Gastrocnemius medialis (tissue), 4 donors: ENCODE measurements at regions of chr13 and their contacts with region 1.

Region 1: DNA sequence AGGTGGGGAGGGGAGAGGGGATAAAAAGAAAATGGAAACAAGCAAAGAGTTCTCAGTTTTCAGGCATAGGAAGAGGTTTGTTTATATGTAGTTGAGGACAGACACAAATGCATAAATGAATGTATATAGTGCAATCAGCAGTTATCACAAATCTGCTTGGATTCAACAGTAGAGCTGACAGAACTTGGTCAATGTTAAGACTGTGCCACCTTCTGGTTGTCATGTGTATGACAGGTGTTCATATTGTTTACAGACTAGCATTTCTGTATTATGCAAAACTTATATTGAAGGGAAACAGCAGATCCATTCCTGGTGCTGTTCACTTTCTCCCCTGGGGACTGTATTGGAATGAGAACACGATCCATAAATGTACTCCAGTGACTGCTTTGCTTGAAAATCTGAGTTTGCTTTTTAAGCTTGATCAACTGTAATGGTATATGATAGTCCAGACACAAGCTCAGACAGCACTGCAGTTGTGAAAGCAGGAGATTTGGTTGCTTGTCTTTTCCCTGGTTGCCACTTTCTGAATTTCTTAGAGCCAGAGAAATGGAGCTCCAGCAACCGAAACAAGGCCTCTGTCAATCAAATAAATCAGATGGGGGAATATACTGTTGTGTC is 319.5 kb upstream of the OBI1 start:
- DNase-seq: no peak
- ATAC-seq: peak; percentile 36 to 62
- H3K4me3 ChIP-seq: no peak overlapping the region
- H3K27ac ChIP-seq: no peak overlapping the region
- H3K4me1 ChIP-seq: no peaks in the 10 kb centered on the region
- H3K27me3 ChIP-seq: no peaks in the 10 kb centered on the region
- CTCF ChIP-seq: peak in 4 of 5 experiments; percentile 43 to 61 (median 52)
- POLR2A ChIP-seq: no peak

Region 2: DNA sequence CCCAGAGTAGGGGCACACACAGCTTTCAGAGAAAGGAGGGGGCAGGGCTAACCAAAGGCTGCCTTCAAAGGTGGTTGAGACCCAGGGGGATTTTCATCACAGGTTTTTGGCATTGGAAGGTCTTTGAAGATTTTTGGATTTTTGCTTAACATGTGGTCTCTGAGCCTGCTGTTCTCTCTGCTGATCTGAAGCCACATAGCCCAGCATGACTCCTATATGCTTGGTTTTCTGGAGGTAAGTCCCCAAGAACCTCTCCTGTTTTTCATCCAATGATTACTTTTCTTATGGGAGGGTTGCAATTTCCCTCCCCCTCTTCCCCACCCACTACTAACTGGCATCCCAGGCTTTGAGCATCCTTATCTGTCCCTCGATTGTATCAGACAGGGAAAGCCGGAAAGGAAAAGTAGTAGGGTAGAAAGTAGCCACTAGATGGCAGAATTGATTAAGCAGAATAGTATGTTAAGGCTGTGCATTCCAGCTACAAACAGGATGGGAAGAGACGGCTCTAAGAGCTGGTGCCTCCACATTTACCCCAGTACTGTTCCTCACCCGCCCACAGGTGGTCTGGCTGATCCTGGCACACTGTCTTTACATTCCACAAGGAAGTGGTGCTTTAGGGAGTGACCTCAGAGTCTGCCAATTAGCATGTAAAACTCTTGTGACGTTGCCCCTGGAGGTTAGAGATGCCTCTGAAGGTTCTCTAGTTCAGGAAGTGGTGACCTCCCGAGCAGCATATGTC is 840.9 kb before region 1 on chr13:
- in situ Hi-C with region 1: loop called (anchors 5 to 10 kb)
- intact Hi-C with region 1: no loop called
- DNase-seq: no peak
- ATAC-seq: peak in 1 of 2 donors; percentile 68
- H3K4me3 ChIP-seq: no peak overlapping the region
- H3K27ac ChIP-seq: no peak overlapping the region
- H3K4me1 ChIP-seq: no peaks in the 10 kb centered on the region
- H3K27me3 ChIP-seq: no peaks in the 10 kb centered on the region
- CTCF ChIP-seq: peak in 4 of 5 experiments; percentile 10 to 63 (median 52)
- POLR2A ChIP-seq: no peak

Region 3: DNA sequence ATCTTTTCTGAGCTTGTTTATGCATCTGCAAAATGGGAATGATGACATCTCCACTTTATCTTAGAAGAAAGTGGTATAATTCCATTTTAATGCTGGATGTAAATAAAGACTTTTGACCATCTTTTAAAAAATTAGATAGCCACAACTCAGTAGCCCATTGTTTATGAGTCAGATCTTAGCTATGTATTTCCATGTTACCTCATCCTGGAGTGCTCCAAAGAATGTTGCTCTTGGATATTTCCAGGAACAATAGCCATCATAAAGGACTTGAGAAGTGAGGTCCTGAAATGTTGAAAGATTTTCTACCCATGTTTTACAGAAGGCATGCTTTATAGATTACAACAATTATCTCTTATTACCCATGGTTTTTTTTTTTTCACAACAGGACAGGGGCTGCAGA is 830.6 kb before region 1 on chr13:
- in situ Hi-C with region 1: loop called in 2 of 4 experiments (anchors 5 to 10 kb)
- intact Hi-C with region 1: no loop called
- DNase-seq: no peak
- ATAC-seq: no peak
- H3K4me3 ChIP-seq: no peak overlapping the region
- H3K27ac ChIP-seq: no peak overlapping the region
- H3K4me1 ChIP-seq: no peaks in the 10 kb centered on the region
- H3K27me3 ChIP-seq: no peaks in the 10 kb centered on the region
- CTCF ChIP-seq: no peak
- POLR2A ChIP-seq: no peak